ENCODE measurements at regions of chr15 and their contacts with region 1.

Region 1: GRCh38 chr15:95684693-95685115 is 645.8 kb upstream of the NR2F2 start:
- DNase-seq: peak; percentile 97
- H3K4me3 ChIP-seq: no peak overlapping the region
- H3K27ac ChIP-seq: peak overlapping the region; percentile 66
- H3K4me1 ChIP-seq: peaks cover 22% of the 10 kb centered on the region
- H3K27me3 ChIP-seq: no peaks in the 10 kb centered on the region
- CTCF ChIP-seq: no peak
- POLR2A ChIP-seq: peak; percentile 66

Region 2: GRCh38 chr15:95284933-95285421 is 399.7 kb before region 1 on chr15:
- CTCF ChIA-PET with region 1: no interaction called
- POLR2A ChIA-PET with region 1: no interaction called
- dilution Hi-C with region 1: no loop called
- intact Hi-C with region 1: loop called (anchors 1 kb)
- DNase-seq: peak; percentile 88
- H3K4me3 ChIP-seq: no peak overlapping the region
- H3K27ac ChIP-seq: peak overlapping the region; percentile 15
- H3K4me1 ChIP-seq: peaks cover 63% of the 10 kb centered on the region
- H3K27me3 ChIP-seq: no peaks in the 10 kb centered on the region
- CTCF ChIP-seq: peak; percentile 21 to 28
- POLR2A ChIP-seq: no peak

Region 3: GRCh38 chr15:95365511-95366107 is 319.1 kb before region 1 on chr15:
- CTCF ChIA-PET with region 1: no interaction called
- POLR2A ChIA-PET with region 1: no interaction called
- dilution Hi-C with region 1: no loop called
- intact Hi-C with region 1: loop called (anchors 1 kb)
- DNase-seq: peak; percentile 100
- H3K4me3 ChIP-seq: no peak overlapping the region
- H3K27ac ChIP-seq: peak overlapping the region; percentile 98
- H3K4me1 ChIP-seq: peaks cover 37% of the 10 kb centered on the region
- H3K27me3 ChIP-seq: no peaks in the 10 kb centered on the region
- CTCF ChIP-seq: no peak
- POLR2A ChIP-seq: peak; percentile 87

Region 4: GRCh38 chr15:95557226-95558046 is 127.3 kb before region 1 on chr15:
- CTCF ChIA-PET with region 1: no interaction called
- POLR2A ChIA-PET with region 1: no interaction called
- dilution Hi-C with region 1: no loop called
- intact Hi-C with region 1: loop called (anchors 1 kb)
- DNase-seq: peak; percentile 96
- H3K4me3 ChIP-seq: peak overlapping the region in 1 of 3 experiments; percentile 10
- H3K27ac ChIP-seq: peak overlapping the region; percentile 100
- H3K4me1 ChIP-seq: peaks cover 39% of the 10 kb centered on the region
- H3K27me3 ChIP-seq: no peaks in the 10 kb centered on the region
- CTCF ChIP-seq: no peak
- POLR2A ChIP-seq: no peak

Region 5: GRCh38 chr15:95709959-95710695 is 25.4 kb after region 1 on chr15:
- CTCF ChIA-PET with region 1: no interaction called
- POLR2A ChIA-PET with region 1: no interaction called
- dilution Hi-C with region 1: no loop called
- intact Hi-C with region 1: no loop called
- DNase-seq: no peak
- H3K4me3 ChIP-seq: no peak overlapping the region
- H3K27ac ChIP-seq: no peak overlapping the region
- H3K4me1 ChIP-seq: peaks cover 1% of the 10 kb centered on the region
- H3K27me3 ChIP-seq: no peaks in the 10 kb centered on the region
- CTCF ChIP-seq: no peak
- POLR2A ChIP-seq: no peak

Region 6: GRCh38 chr15:95734422-95735316 is 50.0 kb after region 1 on chr15:
- CTCF ChIA-PET with region 1: no interaction called
- POLR2A ChIA-PET with region 1: no interaction called
- dilution Hi-C with region 1: no loop called
- intact Hi-C with region 1: loop called (anchors 1 kb)
- DNase-seq: peak; percentile 96
- H3K4me3 ChIP-seq: no peak overlapping the region
- H3K27ac ChIP-seq: peak overlapping the region; percentile 70
- H3K4me1 ChIP-seq: peaks cover 28% of the 10 kb centered on the region
- H3K27me3 ChIP-seq: no peaks in the 10 kb centered on the region
- CTCF ChIP-seq: no peak
- POLR2A ChIP-seq: peak; percentile 50

Region 7: GRCh38 chr15:96273317-96274086 is 588.8 kb after region 1 on chr15:
- CTCF ChIA-PET with region 1: no interaction called
- POLR2A ChIA-PET with region 1: no interaction called
- dilution Hi-C with region 1: no loop called
- intact Hi-C with region 1: loop called (anchors 1 kb)
- DNase-seq: peak; percentile 94
- H3K4me3 ChIP-seq: no peak overlapping the region
- H3K27ac ChIP-seq: peak overlapping the region; percentile 90
- H3K4me1 ChIP-seq: peaks cover 41% of the 10 kb centered on the region
- H3K27me3 ChIP-seq: no peaks in the 10 kb centered on the region
- CTCF ChIP-seq: no peak
- POLR2A ChIP-seq: peak; percentile 84

Region 8: GRCh38 chr15:96345560-96346399 is 661.1 kb after region 1 on chr15:
- CTCF ChIA-PET with region 1: no interaction called
- POLR2A ChIA-PET with region 1: no interaction called
- dilution Hi-C with region 1: no loop called
- intact Hi-C with region 1: loop called (anchors 1 kb)
- DNase-seq: peak; percentile 86
- H3K4me3 ChIP-seq: peak overlapping the region; percentile 16 to 99 (median 74)
- H3K27ac ChIP-seq: peak overlapping the region; percentile 87
- H3K4me1 ChIP-seq: peaks cover 83% of the 10 kb centered on the region
- H3K27me3 ChIP-seq: no peaks in the 10 kb centered on the region
- CTCF ChIP-seq: peak; percentile 22 to 33
- POLR2A ChIP-seq: no peak